Activated CD4-positive, alpha-beta T cell treated with anti-CD3 and anti-CD28 coated beads, Interleukin-2, amount 10 ng/mL, durations not matched to agents 7 days and 5 days (primary cell): ENCODE measurements at regions of chr6 and their contacts with region 1.

Region 1: DNA sequence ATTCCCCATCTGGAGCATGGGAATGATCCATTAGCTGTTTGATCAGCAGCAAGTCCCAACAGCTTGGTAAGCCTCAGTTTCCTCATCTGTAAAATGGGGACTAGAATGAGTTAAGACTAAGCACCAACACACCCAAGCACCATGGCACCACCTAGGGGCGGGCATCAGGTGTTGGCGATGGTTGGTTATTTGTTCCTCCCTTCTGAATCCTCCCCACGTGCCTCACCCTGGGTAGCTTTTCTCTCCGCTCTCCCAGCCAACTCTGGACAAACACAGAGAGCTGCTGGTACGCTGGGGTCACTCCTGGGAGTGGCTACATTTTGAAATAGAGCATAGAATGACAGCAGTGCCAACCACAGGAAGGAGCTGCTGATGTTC is 13.3 kb upstream of the ITPR3 start:
- DNase-seq: peak; percentile 68
- H3K4me3 Mint-ChIP-seq: no peak overlapping the region
- H3K27ac Mint-ChIP-seq: no peak overlapping the region
- H3K4me1 Mint-ChIP-seq: no peaks in the 10 kb centered on the region
- H3K27me3 Mint-ChIP-seq: peaks cover 11% of the 10 kb centered on the region

Region 2: DNA sequence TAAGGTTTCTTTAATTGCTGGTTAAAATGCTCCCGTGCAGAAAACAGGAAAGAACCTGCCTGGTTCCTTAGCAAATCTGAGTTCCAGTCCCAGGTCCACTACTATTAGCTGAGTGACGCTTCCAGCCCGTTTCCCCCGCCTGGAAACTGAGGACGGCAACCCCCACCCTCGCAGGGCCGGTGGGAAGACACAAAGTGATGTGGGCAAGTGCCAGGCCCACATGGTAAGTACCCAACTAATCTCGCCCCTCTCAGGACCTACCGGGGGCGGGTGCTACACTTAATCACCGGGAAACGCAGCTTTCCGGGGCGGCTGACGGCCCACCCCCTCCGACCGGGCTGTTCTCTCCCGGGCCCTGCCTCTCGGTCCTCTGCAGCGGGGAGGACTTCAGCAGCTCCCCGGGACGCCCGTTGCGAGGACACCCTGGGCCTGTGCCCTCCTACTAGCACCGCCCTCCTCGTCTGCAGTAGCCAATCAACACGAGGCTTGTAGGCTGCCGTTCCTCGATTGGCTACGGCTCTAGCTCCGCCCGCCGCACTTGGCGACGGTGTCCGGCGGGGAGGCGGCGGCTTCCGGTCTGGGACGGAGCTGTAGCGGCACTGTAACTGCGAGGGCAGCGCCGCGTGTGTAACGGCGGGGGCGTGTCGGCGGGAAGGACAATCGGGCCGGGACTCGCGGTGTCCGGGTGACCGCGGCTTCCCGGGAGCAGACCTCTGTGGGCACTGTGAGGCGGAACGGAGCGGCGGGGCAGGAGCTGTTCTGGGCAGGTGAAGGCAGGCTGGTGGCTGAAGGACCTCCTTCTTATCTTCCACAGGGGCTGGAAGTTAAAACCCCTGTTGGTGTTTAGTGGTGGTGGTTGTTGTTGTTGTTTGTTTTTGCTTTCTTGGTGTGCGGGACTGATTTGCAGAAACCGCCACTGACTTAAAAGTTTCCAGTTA is 153.5 kb before region 1 on chr6 and contains the start of gene ZBTB9:
- CTCF ChIA-PET with region 1: no interaction called
- POLR2A ChIA-PET with region 1: no interaction called
- DNase-seq: peak; percentile 97
- H3K4me3 Mint-ChIP-seq: peak within 1 kb of the TSS; percentile 91
- H3K27ac Mint-ChIP-seq: peak within 1 kb of the TSS; percentile 90
- H3K4me1 Mint-ChIP-seq: peaks cover 27% of the 10 kb centered on the region
- H3K27me3 Mint-ChIP-seq: no peaks in the 10 kb centered on the region
- total RNA-seq, gene ZBTB9: 9.0 to 9.9 TPM

Region 3: DNA sequence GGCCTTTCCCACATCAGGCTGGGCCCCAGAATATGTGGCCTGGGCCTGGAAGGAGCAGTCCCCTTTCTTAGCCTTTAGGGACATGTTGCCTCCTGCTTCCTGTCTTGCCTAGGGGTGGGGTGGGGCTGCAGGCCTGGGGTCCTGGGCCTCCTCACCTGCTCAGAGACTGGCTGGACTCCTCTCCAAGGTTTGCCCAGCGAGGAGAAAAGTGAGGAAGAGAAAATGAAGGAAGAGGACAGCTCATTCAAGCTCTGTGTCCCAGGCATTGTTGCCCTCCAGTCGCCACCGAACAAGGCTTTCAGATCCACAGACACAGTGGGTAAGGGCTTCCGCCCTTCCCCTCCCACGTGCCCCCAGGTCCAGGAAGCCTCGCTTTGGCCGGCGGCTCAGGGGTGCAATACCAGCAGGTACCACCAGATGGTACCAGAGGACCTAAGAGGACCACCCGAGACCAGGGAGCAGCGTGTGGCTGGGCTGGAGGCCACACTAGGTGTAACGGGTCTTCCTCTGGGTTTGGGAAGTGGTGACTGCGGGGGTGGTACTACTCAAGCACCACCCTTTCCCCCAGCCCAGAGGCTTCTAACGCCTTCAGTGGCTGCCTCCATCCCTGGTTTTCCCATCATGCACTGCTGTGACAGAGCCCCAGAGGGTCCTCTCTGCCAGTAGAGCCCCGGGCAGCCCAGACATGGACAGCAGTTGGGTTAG is 22.2 kb before region 1 on chr6:
- CTCF ChIA-PET with region 1: interaction called, 17 read pairs
- POLR2A ChIA-PET with region 1: no interaction called
- DNase-seq: peak; percentile 89
- H3K4me3 Mint-ChIP-seq: peak overlapping the region; percentile 71
- H3K27ac Mint-ChIP-seq: peak overlapping the region; percentile 97
- H3K4me1 Mint-ChIP-seq: peaks cover 33% of the 10 kb centered on the region
- H3K27me3 Mint-ChIP-seq: no peaks in the 10 kb centered on the region

Region 4: DNA sequence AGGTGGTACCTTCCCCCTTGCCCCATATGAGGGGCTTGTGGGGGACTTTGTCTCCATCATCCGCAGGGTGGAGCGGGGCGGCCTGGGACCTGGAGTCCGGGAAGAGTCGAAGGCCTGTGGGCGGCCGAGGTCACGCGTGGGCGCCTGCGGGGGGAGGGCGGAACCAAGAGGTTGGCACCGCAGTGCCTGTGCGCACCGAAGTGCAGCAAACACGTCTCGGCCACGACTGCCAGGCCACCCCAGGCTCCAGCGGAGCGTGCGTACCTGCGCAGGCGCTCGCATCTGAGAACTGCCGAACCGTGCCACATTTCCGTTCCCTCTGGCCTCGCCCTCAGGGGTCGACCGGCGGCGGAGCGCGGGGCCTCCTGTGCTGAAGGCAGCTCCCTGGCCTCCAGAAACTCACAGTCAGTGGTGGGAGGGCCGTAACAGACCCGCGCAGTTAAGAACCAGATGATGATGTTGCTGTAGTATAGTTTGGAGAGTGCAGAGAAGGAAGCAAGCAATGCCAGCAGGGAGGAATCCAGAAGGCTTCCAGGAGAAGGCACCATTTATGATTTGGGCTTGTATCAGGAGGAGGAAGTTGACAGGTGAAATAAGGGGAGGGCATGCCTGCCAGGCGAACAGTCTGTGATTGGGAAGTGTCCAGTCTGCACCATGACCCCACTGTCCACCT is 14.6 kb before region 1 on chr6:
- CTCF ChIA-PET with region 1: interaction called, 17 read pairs
- POLR2A ChIA-PET with region 1: no interaction called
- DNase-seq: peak; percentile 47
- H3K4me3 Mint-ChIP-seq: peak overlapping the region; percentile 61
- H3K27ac Mint-ChIP-seq: peak overlapping the region; percentile 80
- H3K4me1 Mint-ChIP-seq: peaks cover 31% of the 10 kb centered on the region
- H3K27me3 Mint-ChIP-seq: peaks cover 2% of the 10 kb centered on the region